ENCODE measurements at regions of chr1 and their contacts with region 1.

Region 1: GRCh38 chr1:84598846-84599741 is 24.9 kb upstream of the CTBS start:
- DNase-seq: no peak
- ATAC-seq: peak; percentile 88
- H3K4me3 Mint-ChIP-seq: peak overlapping the region; percentile 30
- H3K27ac Mint-ChIP-seq: peak overlapping the region; percentile 86
- H3K4me1 Mint-ChIP-seq: peaks cover 32% of the 10 kb centered on the region
- H3K27me3 Mint-ChIP-seq: no peaks in the 10 kb centered on the region

Region 2: GRCh38 chr1:83593073-83593472 is 1006.0 kb before region 1 on chr1:
- CTCF ChIA-PET with region 1: no interaction called
- POLR2A ChIA-PET with region 1: no interaction called
- intact Hi-C with region 1: no loop called
- DNase-seq: no peak
- ATAC-seq: no peak
- H3K4me3 Mint-ChIP-seq: no peak overlapping the region
- H3K27ac Mint-ChIP-seq: no peak overlapping the region
- H3K4me1 Mint-ChIP-seq: peaks cover 16% of the 10 kb centered on the region
- H3K27me3 Mint-ChIP-seq: no peaks in the 10 kb centered on the region

Region 3: GRCh38 chr1:84735483-84735882 is 136.4 kb after region 1 on chr1:
- CTCF ChIA-PET with region 1: no interaction called
- POLR2A ChIA-PET with region 1: no interaction called
- intact Hi-C with region 1: no loop called
- DNase-seq: no peak
- ATAC-seq: no peak
- H3K4me3 Mint-ChIP-seq: no peak overlapping the region
- H3K27ac Mint-ChIP-seq: no peak overlapping the region
- H3K4me1 Mint-ChIP-seq: no peaks in the 10 kb centered on the region
- H3K27me3 Mint-ChIP-seq: peaks cover 22% of the 10 kb centered on the region

Region 4: DNA sequence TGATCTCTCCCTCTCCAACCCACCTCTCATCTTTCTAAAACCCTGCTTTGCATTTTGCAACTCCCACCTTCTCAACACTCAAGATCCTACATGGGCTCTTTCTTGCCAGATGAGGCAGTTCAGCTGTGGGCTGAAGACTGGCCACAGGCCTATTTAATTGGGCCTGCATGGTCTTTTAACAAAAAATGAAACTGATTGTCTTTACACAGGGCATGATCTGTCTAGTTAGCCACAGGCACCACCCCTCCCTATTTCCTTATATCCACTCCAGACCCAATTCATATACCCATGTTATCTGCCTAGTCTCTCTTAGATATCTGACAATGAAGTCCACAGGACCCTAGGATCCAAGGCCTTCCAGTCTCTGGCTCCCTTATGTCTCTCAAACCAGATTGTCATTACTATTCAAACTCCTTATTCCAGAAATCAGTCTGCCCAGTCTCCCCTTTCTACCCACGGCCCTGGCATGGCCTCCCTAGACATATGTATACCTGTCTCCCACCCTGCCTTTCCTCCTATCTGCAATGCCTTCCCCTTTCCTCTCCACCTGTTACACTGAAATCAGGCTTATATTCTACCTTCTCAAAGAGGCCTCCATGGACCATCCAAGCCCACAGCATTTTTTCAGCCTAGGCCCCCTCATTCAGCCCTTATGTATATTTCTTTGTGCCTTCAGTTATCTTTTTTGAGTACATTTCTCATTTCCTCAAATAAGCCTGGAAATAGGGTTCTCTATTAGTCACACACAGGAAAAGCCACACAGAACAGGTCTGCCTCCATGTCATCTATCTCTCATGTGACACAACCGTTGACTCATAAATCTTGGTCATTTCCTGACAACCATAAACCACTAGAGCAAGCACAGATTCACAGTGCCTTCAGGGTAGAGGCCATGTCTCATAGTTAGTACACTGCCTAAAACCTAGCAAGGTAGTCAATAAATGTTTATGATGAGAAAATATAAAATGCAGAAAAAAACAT is 254.9 kb after region 1 on chr1:
- CTCF ChIA-PET with region 1: no interaction called
- POLR2A ChIA-PET with region 1: no interaction called
- intact Hi-C with region 1: loop called in 1 of 2 experiments (anchors 1 kb)
- DNase-seq: peak; percentile 49
- ATAC-seq: peak; percentile 100
- H3K4me3 Mint-ChIP-seq: no peak overlapping the region
- H3K27ac Mint-ChIP-seq: peak overlapping the region; percentile 77
- H3K4me1 Mint-ChIP-seq: peaks cover 33% of the 10 kb centered on the region
- H3K27me3 Mint-ChIP-seq: no peaks in the 10 kb centered on the region

Region 5: DNA sequence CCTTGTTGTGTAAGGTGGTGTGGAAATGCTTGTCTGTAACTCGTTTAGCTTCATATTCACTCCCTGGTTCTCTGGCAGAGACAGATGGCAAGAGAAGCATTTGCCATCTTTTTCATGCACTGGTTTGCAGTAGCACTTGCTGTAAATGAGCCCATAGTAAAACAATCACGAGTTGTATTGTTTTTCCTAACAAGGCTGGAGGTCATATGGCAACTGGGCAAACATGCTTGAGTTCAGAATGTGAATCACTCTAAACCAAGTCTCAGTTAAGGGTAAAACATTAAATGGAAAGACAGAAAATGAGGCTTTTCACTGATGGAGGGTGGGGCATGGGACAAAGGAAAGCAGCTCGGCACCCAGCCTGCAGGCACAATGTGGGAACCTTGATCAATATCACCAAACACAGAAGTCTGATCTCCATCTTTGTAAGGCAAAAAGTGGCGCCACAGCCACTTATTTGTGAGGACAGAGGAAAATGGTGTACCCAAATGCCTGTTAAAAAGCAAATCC is 320.4 kb after region 1 on chr1:
- CTCF ChIA-PET with region 1: no interaction called
- POLR2A ChIA-PET with region 1: no interaction called
- intact Hi-C with region 1: no loop called
- DNase-seq: no peak
- ATAC-seq: no peak
- H3K4me3 Mint-ChIP-seq: no peak overlapping the region
- H3K27ac Mint-ChIP-seq: no peak overlapping the region
- H3K4me1 Mint-ChIP-seq: no peaks in the 10 kb centered on the region
- H3K27me3 Mint-ChIP-seq: peaks cover 4% of the 10 kb centered on the region